GM12878 (cell line): ENCODE measurements at regions of chr12 and their contacts with region 1.

Region 1: DNA sequence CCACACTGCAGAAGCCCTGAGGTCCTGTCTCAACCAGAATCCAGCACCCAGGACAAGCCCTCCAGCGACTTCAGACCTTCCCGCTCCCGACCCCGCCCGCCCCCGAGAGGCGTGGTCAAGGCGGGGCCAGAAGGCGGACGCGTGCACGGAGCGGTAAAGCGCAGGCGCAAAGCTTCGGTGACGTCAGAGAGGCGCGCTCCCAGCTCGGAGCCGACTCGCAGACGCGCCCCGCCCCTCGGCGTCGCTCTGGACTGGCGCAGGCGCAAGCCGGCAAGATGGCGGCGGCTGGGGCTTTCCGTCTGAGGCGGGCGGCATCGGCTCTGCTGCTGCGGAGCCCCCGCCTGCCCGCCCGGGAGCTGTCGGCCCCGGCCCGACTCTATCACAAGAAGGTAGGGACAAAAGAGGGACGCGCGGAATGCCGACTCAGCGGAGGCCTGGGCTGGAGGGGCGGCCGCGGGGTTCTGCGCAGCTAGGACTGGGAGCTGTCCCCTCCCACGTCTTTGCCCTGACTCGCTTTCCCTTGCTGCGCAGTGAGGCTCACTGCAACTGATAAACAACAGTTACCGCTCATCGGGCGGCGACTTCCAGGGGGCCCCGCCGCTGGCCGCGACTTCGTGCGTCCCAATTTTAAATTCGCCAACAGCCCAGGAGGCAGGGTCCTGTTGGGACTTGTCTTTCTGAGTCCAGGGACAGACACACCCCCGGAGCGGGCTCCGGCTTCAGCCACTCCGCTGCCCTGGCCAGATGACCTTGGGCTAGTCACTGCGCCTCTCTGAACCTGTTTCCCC is at the start of gene ISCU:
- DNase-seq: peak; percentile 90
- ATAC-seq: peak; percentile 66
- H3K4me3 ChIP-seq: peak within 1 kb of the TSS; percentile 89
- H3K27ac ChIP-seq: peak within 1 kb of the TSS; percentile 100
- H3K4me1 ChIP-seq: peaks cover 42% of the 10 kb centered on the region
- H3K27me3 ChIP-seq: no peaks in the 10 kb centered on the region
- CTCF ChIP-seq: no peak
- EP300 ChIP-seq: no peak
- POLR2A ChIP-seq: peak; percentile 94
- RAD21 ChIP-seq: no peak
- polyA plus RNA-seq, gene ISCU: 32.8 to 66.1 TPM

Region 2: GRCh38 chr12:108547686-108548085 is 14.9 kb before region 1 on chr12:
- CTCF ChIA-PET with region 1: interaction called, 12 read pairs
- POLR2A ChIA-PET with region 1: interaction called, 18 read pairs
- RAD21 ChIA-PET with region 1: interaction called, 14 read pairs
- SMC1A ChIA-PET with region 1: interaction called, 9 read pairs
- in situ Hi-C with region 1: no loop called
- intact Hi-C with region 1: no loop called
- DNase-seq: no peak
- ATAC-seq: no peak
- H3K4me3 ChIP-seq: no peak overlapping the region
- H3K27ac ChIP-seq: peak overlapping the region; percentile 32; the same call in 1 of the 2 replicates
- H3K4me1 ChIP-seq: peaks cover 27% of the 10 kb centered on the region
- H3K27me3 ChIP-seq: no peaks in the 10 kb centered on the region
- CTCF ChIP-seq: no peak
- EP300 ChIP-seq: no peak
- POLR2A ChIP-seq: no peak
- RAD21 ChIP-seq: no peak

Region 3: GRCh38 chr12:108618079-108618952 is 55.8 kb after region 1 on chr12:
- CTCF ChIA-PET with region 1: interaction called, 866 read pairs
- POLR2A ChIA-PET with region 1: interaction called, 211 read pairs
- RAD21 ChIA-PET with region 1: interaction called, 633 read pairs
- SMC1A ChIA-PET with region 1: interaction called, 718 read pairs
- in situ Hi-C with region 1: loop called (anchors 5 kb)
- intact Hi-C with region 1: loop called (anchors 1 kb)
- DNase-seq: no peak
- ATAC-seq: peak; percentile 73
- H3K4me3 ChIP-seq: no peak overlapping the region
- H3K27ac ChIP-seq: peak overlapping the region; percentile 99
- H3K4me1 ChIP-seq: peaks cover 47% of the 10 kb centered on the region
- H3K27me3 ChIP-seq: no peaks in the 10 kb centered on the region
- CTCF ChIP-seq: peak; percentile 92 to 95 (median 94)
- EP300 ChIP-seq: no peak
- POLR2A ChIP-seq: no peak
- RAD21 ChIP-seq: peak; percentile 96

Region 4: GRCh38 chr12:108712165-108712924 is 149.8 kb after region 1 on chr12:
- CTCF ChIA-PET with region 1: no interaction called
- POLR2A ChIA-PET with region 1: no interaction called
- RAD21 ChIA-PET with region 1: no interaction called
- SMC1A ChIA-PET with region 1: interaction called, 3 read pairs
- in situ Hi-C with region 1: no loop called
- intact Hi-C with region 1: loop called (anchors 5 kb)
- DNase-seq: no peak
- ATAC-seq: peak; percentile 80
- H3K4me3 ChIP-seq: no peak overlapping the region
- H3K27ac ChIP-seq: peak overlapping the region; percentile 20; the same call in 1 of the 2 replicates
- H3K4me1 ChIP-seq: peaks cover 36% of the 10 kb centered on the region
- H3K27me3 ChIP-seq: no peaks in the 10 kb centered on the region
- CTCF ChIP-seq: no peak
- EP300 ChIP-seq: no peak
- POLR2A ChIP-seq: no peak
- RAD21 ChIP-seq: no peak

Region 5: GRCh38 chr12:108838194-108839017 is 275.9 kb after region 1 on chr12:
- CTCF ChIA-PET with region 1: no interaction called
- POLR2A ChIA-PET with region 1: no interaction called
- RAD21 ChIA-PET with region 1: no interaction called
- SMC1A ChIA-PET with region 1: no interaction called
- in situ Hi-C with region 1: no loop called
- intact Hi-C with region 1: no loop called
- DNase-seq: peak; percentile 91
- ATAC-seq: peak; percentile 98
- H3K4me3 ChIP-seq: no peak overlapping the region
- H3K27ac ChIP-seq: peak overlapping the region; percentile 90
- H3K4me1 ChIP-seq: peaks cover 21% of the 10 kb centered on the region
- H3K27me3 ChIP-seq: no peaks in the 10 kb centered on the region
- CTCF ChIP-seq: no peak
- EP300 ChIP-seq: peak; percentile 91 to 93
- POLR2A ChIP-seq: peak; percentile 59; the same call in 1 of the 2 replicates
- RAD21 ChIP-seq: no peak

Region 6: DNA sequence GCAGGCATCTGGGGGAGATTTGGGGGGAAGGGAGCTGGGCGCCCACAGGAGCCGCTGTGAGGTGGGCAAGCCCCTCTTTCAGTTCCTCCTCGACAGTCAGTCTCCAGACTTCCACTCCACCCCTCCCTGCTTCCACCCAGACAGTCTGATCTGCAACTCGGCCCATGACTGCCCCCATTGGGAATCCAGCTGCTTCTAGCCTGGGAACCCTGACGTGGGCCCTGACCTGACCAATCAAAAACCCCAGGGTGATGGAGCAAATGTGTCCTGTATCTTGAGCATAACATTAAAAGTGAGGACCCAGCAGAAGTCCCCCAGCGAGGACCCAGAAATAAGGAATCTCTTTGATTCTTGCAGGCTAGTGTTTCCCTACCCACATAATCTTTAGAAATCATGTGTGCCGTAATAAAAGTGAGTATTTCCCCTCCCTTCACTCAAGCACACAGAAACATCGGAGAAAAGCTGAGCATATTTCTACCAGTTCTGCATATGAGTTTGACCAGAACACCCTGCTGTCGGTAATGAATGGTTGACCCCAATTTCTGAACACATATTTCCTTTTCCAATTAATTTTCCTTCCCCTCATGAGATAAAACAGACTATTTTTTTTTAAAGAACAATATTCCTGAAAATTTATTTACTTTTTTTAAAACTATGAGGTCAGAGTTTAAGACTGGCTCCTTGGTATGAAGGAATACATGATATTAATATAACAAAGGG is 288.5 kb after region 1 on chr12:
- CTCF ChIA-PET with region 1: interaction called, 7 read pairs
- POLR2A ChIA-PET with region 1: interaction called, 5 read pairs
- RAD21 ChIA-PET with region 1: interaction called, 51 read pairs
- SMC1A ChIA-PET with region 1: interaction called, 48 read pairs
- in situ Hi-C with region 1: loop called (anchors 5 kb)
- intact Hi-C with region 1: loop called (anchors 1 kb)
- DNase-seq: peak; percentile 79
- ATAC-seq: peak; percentile 82
- H3K4me3 ChIP-seq: no peak overlapping the region
- H3K27ac ChIP-seq: peak overlapping the region; percentile 74
- H3K4me1 ChIP-seq: peaks cover 36% of the 10 kb centered on the region
- H3K27me3 ChIP-seq: no peaks in the 10 kb centered on the region
- CTCF ChIP-seq: peak in 2 of 3 experiments; percentile 27 to 56; a peak in 4 of 6 replicates
- EP300 ChIP-seq: peak; percentile 66 to 84; a peak in 3 of 4 replicates
- POLR2A ChIP-seq: no peak
- RAD21 ChIP-seq: peak; percentile 67; the same call in 1 of the 2 replicates

Region 7: DNA sequence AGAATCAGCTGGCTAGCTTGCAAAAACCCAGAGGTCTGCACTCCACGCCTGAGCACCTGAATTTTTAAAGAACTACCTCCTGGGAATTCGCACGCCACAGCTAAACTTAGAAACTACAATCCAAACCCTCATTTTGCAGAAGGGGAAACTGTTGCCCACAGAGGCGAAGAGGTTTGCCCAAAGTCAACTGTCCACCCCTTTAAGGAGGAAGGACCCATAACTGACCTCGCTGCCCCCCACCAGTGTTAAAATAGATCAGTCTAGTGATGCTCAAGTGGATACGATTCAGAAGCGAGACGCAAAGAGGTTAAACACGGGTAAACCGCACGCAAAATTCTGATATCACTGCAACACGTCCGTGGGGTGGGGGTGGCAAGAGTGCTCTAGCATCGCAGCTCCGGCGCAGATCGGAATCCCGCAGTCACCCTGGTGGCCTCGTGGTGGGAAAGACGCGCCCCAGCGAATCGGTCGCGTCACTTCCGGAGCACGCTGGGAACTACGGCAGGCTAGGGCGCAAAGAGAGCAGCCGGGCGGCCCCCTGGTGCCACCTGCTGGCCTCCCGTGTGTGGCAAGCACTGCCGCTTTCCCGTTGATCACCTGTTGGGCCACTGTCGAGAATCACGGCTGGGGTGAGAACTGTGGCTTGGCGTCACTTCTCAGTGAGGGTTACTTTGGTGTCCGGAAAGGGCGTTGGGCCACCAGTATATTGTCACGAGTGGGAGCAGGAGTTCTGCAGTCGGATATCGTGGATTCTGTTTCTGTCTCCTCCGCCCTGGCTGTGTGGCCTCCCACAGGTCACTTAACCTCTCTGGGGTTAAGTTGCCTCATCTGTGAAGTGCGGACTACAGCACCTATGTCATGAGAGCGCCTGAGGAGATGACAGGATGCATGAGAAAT is 530.7 kb after region 1 on chr12 and contains the start of gene ALKBH2:
- CTCF ChIA-PET with region 1: interaction called, 3 read pairs
- POLR2A ChIA-PET with region 1: no interaction called
- RAD21 ChIA-PET with region 1: interaction called, 4 read pairs
- SMC1A ChIA-PET with region 1: no interaction called
- in situ Hi-C with region 1: loop called (anchors 5 kb)
- intact Hi-C with region 1: no loop called
- DNase-seq: peak; percentile 72
- ATAC-seq: peak; percentile 73
- H3K4me3 ChIP-seq: peak within 1 kb of the TSS; percentile 77
- H3K27ac ChIP-seq: peak within 1 kb of the TSS; percentile 77
- H3K4me1 ChIP-seq: peaks cover 7% of the 10 kb centered on the region
- H3K27me3 ChIP-seq: no peaks in the 10 kb centered on the region
- CTCF ChIP-seq: peak; percentile 98 to 99 (median 98); a peak in 5 of 6 replicates
- EP300 ChIP-seq: no peak
- POLR2A ChIP-seq: peak; percentile 97
- RAD21 ChIP-seq: peak; percentile 75
- polyA plus RNA-seq, gene ALKBH2: 5.6 to 8.8 TPM